Prostate gland (tissue), 2 donors: ENCODE measurements at regions of chr11 and their contacts with region 1.

Region 1: DNA sequence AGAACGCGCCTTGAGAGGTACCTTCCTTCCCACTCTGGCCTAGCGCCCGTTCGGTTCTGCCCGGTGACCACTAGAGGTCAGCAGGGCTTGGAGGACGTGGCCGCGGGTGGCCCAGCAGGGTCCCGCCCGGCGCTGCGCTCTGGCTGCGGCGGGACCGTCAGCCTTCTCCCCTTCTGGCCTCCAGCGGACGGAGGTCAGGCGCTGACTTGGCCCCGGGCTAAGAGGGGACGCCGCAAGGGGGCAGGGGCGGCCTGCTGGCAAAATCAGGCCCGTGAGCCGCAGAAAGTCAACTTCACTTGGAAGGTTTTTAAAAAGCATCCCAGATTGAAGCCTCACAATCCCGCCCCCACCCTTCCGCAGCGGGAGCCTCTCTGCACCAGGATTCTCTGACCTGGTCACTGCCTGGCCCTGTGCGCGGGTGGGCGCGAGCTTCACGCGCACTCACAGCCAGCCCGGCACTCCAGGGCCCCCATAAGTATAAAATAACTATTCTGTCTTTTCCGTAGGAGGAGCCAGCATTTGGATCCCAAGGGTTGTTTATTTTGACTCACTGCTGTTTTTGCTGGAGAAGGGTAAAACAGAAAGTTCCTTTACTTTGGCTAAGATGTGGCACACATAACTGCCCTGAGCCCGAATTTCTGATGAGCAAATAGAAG is 23.2 kb upstream of the ZBTB16 start:
- DNase-seq: peak; percentile 87
- H3K4me3 ChIP-seq: peak overlapping the region; percentile 24 to 38
- H3K27ac ChIP-seq: peak overlapping the region; percentile 96 to 98
- H3K4me1 ChIP-seq: peaks cover 13% of the 10 kb centered on the region
- H3K27me3 ChIP-seq: no peaks in the 10 kb centered on the region
- CTCF ChIP-seq: peak; percentile 83 to 97 (median 94)
- POLR2A ChIP-seq: no peak

Region 2: DNA sequence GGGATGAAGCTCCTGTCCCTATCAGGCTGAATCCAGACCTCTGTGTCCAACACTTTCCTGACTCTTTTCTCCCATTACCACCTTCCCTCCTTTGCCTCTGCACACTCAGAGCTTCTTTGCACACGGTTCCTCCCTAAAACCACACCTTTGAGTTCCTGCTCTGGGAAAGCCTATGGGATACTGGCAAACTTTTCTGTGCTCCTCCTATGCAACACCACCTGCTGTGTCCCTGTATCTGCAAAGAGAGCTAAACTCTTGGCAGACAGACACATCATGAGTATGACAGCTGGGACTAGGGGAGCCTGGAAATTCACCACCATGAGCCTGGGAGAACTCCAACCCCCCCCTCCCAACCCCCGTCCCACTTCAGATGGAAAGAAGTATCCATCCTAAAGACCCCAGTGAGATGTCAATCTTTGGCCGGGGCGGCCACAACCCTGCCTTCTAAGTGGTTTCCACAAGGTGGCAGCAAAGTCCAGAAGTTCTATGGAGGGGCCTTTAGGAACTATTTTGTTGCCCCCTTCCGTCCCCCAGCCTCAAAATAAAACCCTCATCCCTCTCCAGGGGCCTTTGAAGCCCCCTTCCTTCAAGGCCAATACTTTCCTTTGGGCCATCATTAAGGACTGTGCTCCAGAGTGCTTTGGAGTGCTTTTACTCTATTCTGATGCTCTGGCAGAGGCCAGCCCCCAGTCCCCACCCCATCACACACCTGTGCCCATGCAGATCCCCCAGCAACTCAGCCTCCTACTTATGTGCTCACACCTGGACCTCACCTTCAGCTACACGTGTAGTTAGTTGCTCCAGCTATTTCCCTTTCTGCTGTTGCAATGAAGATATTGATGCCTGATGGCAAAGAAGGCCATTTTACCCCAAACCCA is 42.0 kb before region 1 on chr11:
- intact Hi-C with region 1: loop called (anchors 5 kb)
- DNase-seq: no peak
- H3K4me3 ChIP-seq: no peak overlapping the region
- H3K27ac ChIP-seq: no peak overlapping the region
- H3K4me1 ChIP-seq: no peaks in the 10 kb centered on the region
- H3K27me3 ChIP-seq: no peaks in the 10 kb centered on the region
- CTCF ChIP-seq: peak; percentile 47 to 81 (median 70)
- POLR2A ChIP-seq: no peak